ENCODE measurements at regions of chr18 and their contacts with region 1.

Region 1: GRCh38 chr18:34867520-34867919 is 157.4 kb downstream of the DTNA start:
- DNase-seq: no peak
- H3K4me3 Mint-ChIP-seq: no peak overlapping the region
- H3K27ac Mint-ChIP-seq: peak overlapping the region; percentile 53
- H3K4me1 Mint-ChIP-seq: peaks cover 51% of the 10 kb centered on the region
- H3K27me3 Mint-ChIP-seq: no peaks in the 10 kb centered on the region

Region 2: DNA sequence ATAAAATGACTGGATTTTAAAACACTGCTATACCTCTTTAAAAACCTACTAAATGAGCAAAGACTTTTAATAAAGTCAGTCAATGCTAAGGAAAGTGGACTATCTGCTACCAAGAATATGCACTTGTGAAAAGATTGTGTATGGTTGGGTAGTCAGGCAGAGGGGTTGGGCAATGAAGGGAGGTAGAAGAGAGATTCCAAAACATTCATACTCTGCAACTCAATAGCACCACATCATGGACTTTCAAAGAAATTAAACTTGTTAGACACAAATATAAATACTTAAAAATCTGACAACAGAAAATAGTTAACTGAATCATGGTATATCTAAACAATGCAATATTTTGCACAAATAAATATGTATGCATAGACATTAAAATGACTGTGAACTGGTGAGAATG is 33.8 kb after region 1 on chr18:
- CTCF ChIA-PET with region 1: interaction called, 3 read pairs
- intact Hi-C with region 1: loop called (anchors 1 kb)
- DNase-seq: no peak
- H3K4me3 Mint-ChIP-seq: no peak overlapping the region
- H3K27ac Mint-ChIP-seq: no peak overlapping the region
- H3K4me1 Mint-ChIP-seq: peaks cover 9% of the 10 kb centered on the region
- H3K27me3 Mint-ChIP-seq: no peaks in the 10 kb centered on the region

Region 3: DNA sequence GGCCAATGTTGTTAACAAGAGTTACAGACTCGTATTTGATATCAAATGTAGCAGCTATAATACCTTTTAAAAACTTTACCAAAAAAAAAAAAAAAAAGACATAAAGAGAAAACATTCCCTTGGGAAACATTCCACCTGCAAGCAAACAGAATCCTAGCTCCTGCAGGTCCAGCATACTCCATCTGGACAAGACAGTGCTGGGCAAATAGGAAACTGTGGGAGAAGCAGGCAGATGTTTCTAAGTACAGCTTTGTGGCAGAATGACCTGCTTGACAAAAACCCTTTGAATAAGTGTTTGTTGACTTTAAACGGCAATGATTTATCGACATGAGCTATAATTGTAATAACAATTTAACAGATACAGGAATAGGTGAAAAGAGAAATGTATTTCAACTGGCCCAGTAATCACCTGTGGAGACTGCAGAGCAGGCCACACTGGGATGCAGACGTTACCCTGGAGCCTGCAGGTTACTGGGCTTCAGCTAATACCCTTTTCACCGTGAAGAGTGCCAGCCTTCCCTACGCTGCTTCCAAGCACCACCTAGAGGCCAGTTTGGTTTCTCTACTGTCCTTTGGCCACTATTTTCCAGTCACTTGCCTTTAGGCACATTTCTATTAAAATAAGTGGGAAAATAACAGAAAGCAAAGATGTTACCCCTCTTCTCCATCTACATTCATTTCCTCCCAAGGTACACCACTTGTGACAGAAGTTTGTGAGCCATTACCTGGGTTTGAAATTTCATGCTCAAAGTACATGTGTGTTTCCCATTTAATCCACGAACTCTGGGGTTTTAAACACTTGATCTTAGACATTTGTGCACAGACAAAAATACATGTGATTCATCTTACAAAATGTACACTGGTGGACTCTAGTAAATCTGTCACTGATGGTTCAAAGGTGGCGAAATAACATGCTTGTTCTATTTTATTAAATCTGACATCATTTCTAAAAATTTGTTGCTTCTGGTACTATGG is 276.4 kb after region 1 on chr18:
- CTCF ChIA-PET with region 1: interaction called, 3 read pairs
- intact Hi-C with region 1: loop called (anchors 1 kb)
- DNase-seq: peak; percentile 62
- H3K4me3 Mint-ChIP-seq: no peak overlapping the region
- H3K27ac Mint-ChIP-seq: peak overlapping the region; percentile 53
- H3K4me1 Mint-ChIP-seq: peaks cover 2% of the 10 kb centered on the region
- H3K27me3 Mint-ChIP-seq: no peaks in the 10 kb centered on the region

Region 4: DNA sequence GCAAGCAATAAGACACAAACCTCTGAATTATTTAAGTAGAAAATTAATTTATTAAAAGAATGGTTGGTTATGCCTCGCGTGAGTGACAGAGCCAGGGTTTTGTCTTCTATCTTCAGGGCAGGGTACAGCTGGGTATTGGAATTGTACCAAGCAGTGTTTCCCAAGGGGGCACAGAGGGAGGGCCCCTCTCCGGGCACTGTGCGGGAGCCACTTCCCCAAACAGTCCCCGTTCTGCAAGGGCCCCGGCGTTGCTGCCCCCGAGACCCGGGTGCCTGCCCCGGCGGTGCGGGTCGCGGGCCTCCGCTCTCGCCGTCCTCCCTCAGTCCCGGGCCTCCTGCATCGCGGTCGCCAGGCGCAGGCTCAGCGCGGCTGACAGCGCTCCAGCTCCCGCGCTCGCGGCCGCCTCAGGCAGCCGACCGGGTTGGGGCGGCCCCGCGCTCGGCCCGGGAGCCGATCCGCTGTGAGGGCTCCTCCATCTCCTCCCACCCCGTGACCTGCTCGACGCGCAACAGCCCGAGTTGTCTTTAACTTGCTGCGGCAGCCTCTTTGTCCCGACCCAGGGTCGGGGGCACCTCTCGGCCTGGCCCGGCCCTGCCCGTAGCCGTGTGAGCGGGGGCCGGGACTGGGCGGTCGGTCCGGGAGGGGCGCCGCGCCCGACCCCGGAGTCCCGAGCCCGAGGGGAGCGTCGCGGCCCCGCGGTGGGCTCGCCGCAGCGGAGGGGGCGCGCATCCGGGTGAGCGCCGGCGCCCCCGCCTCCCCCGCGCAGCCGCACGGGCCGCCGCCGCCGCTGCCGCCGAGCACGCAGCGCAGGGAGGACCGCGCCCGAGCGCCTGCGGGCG is 713.4 kb after region 1 on chr18:
- CTCF ChIA-PET with region 1: no interaction called
- intact Hi-C with region 1: loop called (anchors 1 kb)
- DNase-seq: peak; percentile 51
- H3K4me3 Mint-ChIP-seq: peak overlapping the region; percentile 74
- H3K27ac Mint-ChIP-seq: peak overlapping the region; percentile 71
- H3K4me1 Mint-ChIP-seq: peaks cover 45% of the 10 kb centered on the region
- H3K27me3 Mint-ChIP-seq: peaks cover 15% of the 10 kb centered on the region

Region 5: GRCh38 chr18:36828630-36829361 is 1961.3 kb after region 1 on chr18 and contains the starts of genes KIAA1328 and TPGS2:
- CTCF ChIA-PET with region 1: no interaction called
- intact Hi-C with region 1: loop called (anchors 10 kb)
- DNase-seq: peak; percentile 88
- H3K4me3 Mint-ChIP-seq: peak within 1 kb of the TSS; percentile 82
- H3K27ac Mint-ChIP-seq: peak within 1 kb of the TSS; percentile 81
- H3K4me1 Mint-ChIP-seq: peaks cover 46% of the 10 kb centered on the region
- H3K27me3 Mint-ChIP-seq: no peaks in the 10 kb centered on the region
- total RNA-seq, gene KIAA1328: 7.2 to 7.8 TPM
- total RNA-seq, gene TPGS2: 71.5 to 73.4 TPM